OCI-LY7 (cell line): ENCODE measurements at regions of chr12 and their contacts with region 1.

Region 1: DNA sequence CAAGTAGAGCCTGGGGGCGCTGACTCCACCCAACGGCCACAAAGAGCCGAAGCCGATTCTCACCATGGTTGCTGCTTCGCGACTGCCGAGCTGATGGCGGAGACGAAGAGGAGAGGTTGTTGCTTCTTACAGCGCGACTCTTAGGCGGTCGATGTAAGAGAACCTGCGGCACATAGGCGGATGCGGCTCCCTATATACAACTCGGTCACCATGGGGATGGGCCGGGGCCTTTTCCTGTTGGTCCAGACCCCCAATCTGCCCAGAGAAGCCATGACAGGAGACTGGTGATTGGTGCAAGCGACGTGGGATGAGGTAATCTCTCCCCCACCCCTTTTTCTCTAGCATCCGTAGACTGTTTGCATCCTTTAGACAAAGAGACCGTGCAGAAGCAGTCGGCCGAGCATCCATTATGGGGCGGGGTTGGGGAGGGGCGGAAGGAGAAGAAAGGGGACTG is at the start of gene TUBA1A:
- DNase-seq: peak; percentile 99
- H3K4me3 ChIP-seq: peak within 1 kb of the TSS; percentile 84
- H3K27ac ChIP-seq: peak within 1 kb of the TSS; percentile 88
- H3K4me1 ChIP-seq: peaks cover 19% of the 10 kb centered on the region
- CTCF ChIP-seq: no peak
- total RNA-seq, gene TUBA1A: 189 and 214 TPM in 2 replicates

Region 2: GRCh38 chr12:49055981-49056754 is 132.8 kb before region 1 on chr12:
- CTCF ChIA-PET with region 1: no interaction called
- POLR2A ChIA-PET with region 1: no interaction called
- intact Hi-C with region 1: no loop called
- DNase-seq: peak; percentile 82
- H3K4me3 ChIP-seq: peak overlapping the region; percentile 87
- H3K27ac ChIP-seq: peak overlapping the region; percentile 53
- H3K4me1 ChIP-seq: peaks cover 25% of the 10 kb centered on the region
- CTCF ChIP-seq: no peak

Region 3: GRCh38 chr12:49110464-49111155 is 78.3 kb before region 1 on chr12 and contains the start of gene LMBR1L:
- CTCF ChIA-PET with region 1: no interaction called
- POLR2A ChIA-PET with region 1: interaction called, 7 read pairs
- intact Hi-C with region 1: loop called (anchors 1 kb)
- DNase-seq: peak; percentile 99
- H3K4me3 ChIP-seq: peak within 1 kb of the TSS; percentile 81
- H3K27ac ChIP-seq: peak within 1 kb of the TSS; percentile 51
- H3K4me1 ChIP-seq: peaks cover 28% of the 10 kb centered on the region
- CTCF ChIP-seq: peak; percentile 65
- total RNA-seq, gene LMBR1L: 26.8 and 37.2 TPM in 2 replicates

Region 4: GRCh38 chr12:49200919-49201594 is 12.1 kb after region 1 on chr12:
- CTCF ChIA-PET with region 1: no interaction called
- POLR2A ChIA-PET with region 1: interaction called, 18 read pairs
- intact Hi-C with region 1: no loop called
- DNase-seq: peak; percentile 64
- H3K4me3 ChIP-seq: no peak overlapping the region
- H3K27ac ChIP-seq: no peak overlapping the region
- H3K4me1 ChIP-seq: peaks cover 16% of the 10 kb centered on the region
- CTCF ChIP-seq: no peak

Region 5: DNA sequence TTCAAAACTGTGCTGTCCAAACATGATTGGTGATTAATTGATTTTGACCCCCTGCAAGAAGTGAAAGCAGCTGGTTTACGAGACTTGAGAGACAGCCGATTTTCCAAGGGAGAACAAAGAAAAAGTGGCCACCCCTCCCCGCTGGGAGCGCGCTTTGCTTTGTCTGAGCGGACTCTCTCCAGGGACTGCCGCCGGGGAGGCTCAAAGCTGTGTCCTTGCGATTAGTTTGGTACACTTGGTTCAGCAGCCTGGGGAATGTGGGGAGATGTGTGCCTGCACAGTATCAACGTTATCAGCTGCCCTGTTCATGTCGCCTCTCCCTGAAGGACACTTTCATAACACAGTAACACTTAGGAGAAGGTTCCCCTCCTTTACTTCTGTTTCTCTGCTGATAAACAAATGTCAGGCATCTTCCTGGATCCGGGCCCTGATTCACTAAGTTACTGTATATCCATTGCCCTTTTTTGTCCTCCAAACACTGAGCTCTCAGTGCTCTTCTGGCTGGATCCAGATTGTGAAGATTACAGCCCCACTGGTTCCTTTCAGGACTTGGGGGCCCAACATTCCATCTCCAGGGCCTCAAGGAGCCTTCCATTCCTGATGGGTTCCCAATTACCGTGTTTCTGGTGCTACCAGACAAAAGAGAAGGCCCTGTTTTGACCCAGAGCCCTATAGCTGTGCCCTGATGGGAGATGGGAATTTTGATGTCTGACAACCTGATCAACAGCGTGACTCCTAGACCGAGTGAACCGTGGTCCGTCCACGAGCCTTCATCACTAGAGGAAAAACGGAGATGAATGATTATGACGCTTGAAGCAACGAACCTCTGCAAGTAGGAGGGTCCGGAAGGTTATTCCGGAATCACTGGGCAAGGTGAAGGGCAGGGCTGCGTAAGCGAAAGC is 44.2 kb after region 1 on chr12:
- CTCF ChIA-PET with region 1: no interaction called
- POLR2A ChIA-PET with region 1: interaction called, 3 read pairs
- intact Hi-C with region 1: loop called (anchors 1 kb)
- DNase-seq: no peak
- H3K4me3 ChIP-seq: no peak overlapping the region
- H3K27ac ChIP-seq: no peak overlapping the region
- H3K4me1 ChIP-seq: peaks cover 4% of the 10 kb centered on the region
- CTCF ChIP-seq: no peak

Region 6: GRCh38 chr12:49264738-49265515 is 76.0 kb after region 1 on chr12 and contains the start of gene TUBA1C:
- CTCF ChIA-PET with region 1: no interaction called
- POLR2A ChIA-PET with region 1: interaction called, 5 read pairs
- intact Hi-C with region 1: loop called (anchors 2 kb)
- DNase-seq: peak; percentile 95
- H3K4me3 ChIP-seq: peak within 1 kb of the TSS; percentile 85
- H3K27ac ChIP-seq: peak within 1 kb of the TSS; percentile 84
- H3K4me1 ChIP-seq: peaks cover 35% of the 10 kb centered on the region
- CTCF ChIP-seq: no peak
- total RNA-seq, gene TUBA1C: 256 and 291 TPM in 2 replicates

Region 7: DNA sequence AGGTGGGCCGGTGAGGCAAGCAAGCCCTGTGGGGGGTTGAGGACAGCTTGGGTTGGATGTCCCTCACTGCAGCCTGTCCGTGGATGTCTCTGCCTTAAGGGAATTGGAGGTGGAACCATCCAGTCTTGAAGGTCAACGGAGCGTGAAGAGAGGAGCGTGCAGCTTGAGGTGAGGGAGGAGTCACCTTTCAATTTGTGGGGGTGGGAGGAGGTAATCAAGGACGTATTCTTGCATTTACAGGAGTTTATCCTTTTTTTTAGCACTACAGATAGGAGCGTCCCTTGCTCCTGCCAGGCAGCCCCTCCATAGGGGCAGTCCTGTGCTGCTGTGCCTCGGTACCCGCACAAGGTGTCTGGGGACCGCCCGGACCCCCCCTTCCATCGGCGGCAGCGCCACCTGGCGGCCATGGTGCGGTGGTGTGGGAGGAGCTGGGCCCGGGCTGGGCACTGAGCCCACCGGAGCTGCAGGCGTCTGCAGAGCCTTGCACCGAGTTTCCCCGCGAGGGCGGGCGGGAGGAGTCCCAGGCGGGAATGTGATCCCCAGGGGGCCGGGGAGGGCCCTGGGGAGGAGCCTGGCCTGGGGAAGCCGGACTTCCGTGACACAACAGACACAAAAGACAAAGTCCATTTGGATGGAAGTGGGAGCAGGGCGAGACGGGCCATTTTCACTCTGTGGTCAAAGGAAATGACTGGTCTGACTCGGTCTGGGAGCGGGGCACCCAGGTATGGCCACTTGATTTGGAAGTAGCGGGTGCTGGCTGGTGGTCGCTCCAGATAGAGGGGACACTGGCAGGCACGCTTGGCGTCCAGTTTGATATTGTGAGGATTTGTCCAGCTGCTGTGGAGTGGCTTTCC is 158.7 kb after region 1 on chr12:
- CTCF ChIA-PET with region 1: no interaction called
- POLR2A ChIA-PET with region 1: no interaction called
- intact Hi-C with region 1: loop called (anchors 5 kb)
- DNase-seq: peak; percentile 77
- H3K4me3 ChIP-seq: peak overlapping the region; percentile 63
- H3K27ac ChIP-seq: no peak overlapping the region
- H3K4me1 ChIP-seq: peaks cover 54% of the 10 kb centered on the region
- CTCF ChIP-seq: peak; percentile 98